GM13976 (cell line): ENCODE measurements at regions of chr9 and their contacts with region 1.

Region 1: GRCh38 chr9:21559424-21560280 is 77.5 kb upstream of the IFNE start:
- DNase-seq: peak; percentile 63
- CTCF ChIP-seq: no peak

Region 2: GRCh38 chr9:20906326-20906725 is 653.3 kb before region 1 on chr9:
- in situ Hi-C with region 1: no loop called
- DNase-seq: no peak
- CTCF ChIP-seq: no peak

Region 3: DNA sequence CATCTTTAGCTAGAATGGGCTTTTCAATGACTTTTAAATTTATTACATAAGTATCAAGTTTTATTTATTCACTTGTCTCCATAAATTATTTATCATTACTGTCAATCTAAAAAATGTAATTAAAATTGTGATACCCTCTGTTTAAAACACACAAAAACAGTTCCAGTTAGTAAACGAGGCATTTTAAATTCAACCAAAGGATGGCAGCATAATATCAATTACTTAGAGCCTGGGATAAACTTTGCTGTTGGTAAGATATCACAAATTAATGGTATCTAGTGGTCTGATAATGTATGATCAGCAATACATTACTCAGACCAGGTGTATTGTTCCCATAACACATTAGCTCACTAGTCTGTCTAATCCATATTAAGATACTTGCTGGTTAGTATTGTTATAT is 67.9 kb before region 1 on chr9:
- in situ Hi-C with region 1: loop called (anchors 10 kb)
- DNase-seq: no peak
- CTCF ChIP-seq: no peak

Region 4: GRCh38 chr9:21883642-21884041 is 324.0 kb after region 1 on chr9:
- in situ Hi-C with region 1: no loop called
- DNase-seq: no peak
- CTCF ChIP-seq: no peak